GM13977 (cell line): ENCODE measurements at regions of chr6 and their contacts with region 1.

Region 1: DNA sequence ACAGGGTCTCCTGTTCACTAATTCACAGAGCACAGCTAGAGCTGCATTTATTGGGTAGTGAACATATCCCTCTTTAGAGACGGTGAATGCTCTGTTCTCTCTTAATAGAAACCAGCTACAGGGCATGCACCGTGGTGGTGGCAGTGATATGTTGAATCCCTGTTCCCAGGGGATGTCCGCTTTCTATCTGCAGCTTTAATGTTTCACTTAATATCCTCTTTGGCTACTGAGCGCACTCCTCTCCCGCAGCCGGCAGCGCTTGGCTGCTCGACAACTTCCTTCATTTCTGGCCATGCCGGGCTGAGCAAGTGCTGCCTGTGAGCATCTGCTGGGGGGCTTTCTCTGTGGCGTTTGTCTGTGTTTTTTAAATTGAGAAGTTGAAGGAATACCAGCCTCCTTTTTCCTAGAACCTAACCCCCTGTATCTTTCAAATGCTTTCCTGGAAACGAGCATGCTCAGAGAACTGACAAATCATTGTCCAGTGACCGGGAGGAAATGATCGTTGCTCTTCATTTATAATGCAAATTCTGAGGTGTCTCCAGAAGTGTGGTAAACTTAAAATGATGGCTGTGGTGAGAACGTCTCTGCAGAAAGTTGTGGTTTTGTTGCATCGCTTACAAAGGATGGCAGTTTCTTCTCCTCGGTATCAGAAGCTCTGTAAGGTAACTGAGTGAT is 297.9 kb downstream of the UTRN start:
- DNase-seq: peak; percentile 30
- CTCF ChIP-seq: no peak

Region 2: GRCh38 chr6:144931172-144932035 is 348.3 kb after region 1 on chr6:
- in situ Hi-C with region 1: loop called (anchors 25 kb)
- DNase-seq: no peak
- CTCF ChIP-seq: peak; percentile 58

Region 3: GRCh38 chr6:145214570-145214969 is 631.5 kb after region 1 on chr6:
- in situ Hi-C with region 1: loop called (anchors 25 kb)
- DNase-seq: no peak
- CTCF ChIP-seq: peak; percentile 38